Heart left ventricle (tissue), 16 donors: ENCODE measurements at regions of chr20 and their contacts with region 1.

Region 1: DNA sequence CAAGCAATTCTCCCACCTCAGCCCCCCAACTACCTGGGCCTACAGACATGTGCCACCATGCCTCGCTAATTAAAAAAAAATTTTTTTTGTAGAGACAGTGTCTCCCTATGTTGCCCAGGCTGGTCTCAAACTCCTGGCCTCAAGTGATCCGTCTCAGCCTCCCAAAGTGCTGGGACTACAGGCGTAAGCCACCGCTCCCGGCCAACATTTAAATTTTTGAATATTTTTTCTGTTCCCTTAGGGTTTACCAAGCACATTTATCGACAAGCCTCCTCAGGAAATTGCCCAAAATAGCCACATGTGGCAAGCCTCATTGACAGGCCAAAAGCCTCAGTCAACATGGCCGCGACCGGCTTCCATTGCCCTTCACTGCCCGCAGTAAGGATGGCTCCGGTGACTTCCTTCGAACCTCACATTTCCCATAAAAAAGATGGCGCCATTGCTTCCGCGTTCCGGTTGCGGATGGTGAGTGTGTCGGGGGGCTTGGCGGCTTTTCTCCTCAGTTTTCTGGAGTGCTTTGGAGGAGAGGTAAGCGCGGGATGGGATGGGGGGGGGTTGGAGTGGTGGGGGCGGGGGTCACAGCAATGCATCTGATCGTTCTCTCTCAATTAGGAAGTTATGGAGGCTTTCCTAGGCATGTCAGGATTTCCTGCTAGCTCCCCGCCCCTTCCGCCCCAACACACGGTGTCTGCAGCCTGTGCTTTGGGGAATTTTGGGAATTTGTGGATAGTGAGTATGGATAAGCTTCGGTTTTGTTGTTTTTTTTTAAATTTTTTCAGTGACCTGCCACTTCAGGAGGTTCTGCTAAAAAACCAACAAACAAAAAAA is at the start of gene SHLD1:
- DNase-seq: peak; percentile 87 to 91 (median 90)
- ATAC-seq: peak; percentile 96 to 99 (median 98)
- H3K4me3 ChIP-seq: peak within 1 kb of the TSS; percentile 23 to 92 (median 64)
- H3K27ac ChIP-seq: peak within 1 kb of the TSS; percentile 68 to 94 (median 87)
- H3K4me1 ChIP-seq: peaks cover 0 to 15% (median 4%) of the 10 kb centered on the region in 12 donors
- H3K27me3 ChIP-seq: no peaks in the 10 kb centered on the region
- CTCF ChIP-seq: no peak
- POLR2A ChIP-seq: no peak
- total RNA-seq, gene SHLD1: 0.94 to 7.1 (median 4.5) TPM

Region 2: GRCh38 chr20:5608442-5609161 is 141.6 kb before region 1 on chr20:
- intact Hi-C with region 1: loop called in 3 of 10 experiments (anchors 10 kb)
- DNase-seq: no peak
- ATAC-seq: no peak
- H3K4me3 ChIP-seq: peak overlapping the region in 10 of 12 donors; percentile 1 to 90 (median 82)
- H3K27ac ChIP-seq: peak overlapping the region in 7 of 12 donors; percentile 94 to 98 (median 96)
- H3K4me1 ChIP-seq: peaks cover 0 to 61% (median 27%) of the 10 kb centered on the region in 12 donors
- H3K27me3 ChIP-seq: no peaks in the 10 kb centered on the region
- CTCF ChIP-seq: no peak
- POLR2A ChIP-seq: no peak

Region 3: GRCh38 chr20:5703681-5704101 is 46.5 kb before region 1 on chr20:
- intact Hi-C with region 1: loop called in 1 of 10 experiments (anchors 5 kb)
- DNase-seq: peak in 1 of 5 donors; percentile 23
- ATAC-seq: peak in 3 of 4 donors; percentile 45 to 83 (median 61)
- H3K4me3 ChIP-seq: peak overlapping the region in 3 of 12 donors; percentile 13 to 21 (median 14)
- H3K27ac ChIP-seq: peak overlapping the region in 10 of 12 donors; percentile 10 to 59 (median 28)
- H3K4me1 ChIP-seq: peaks cover 0 to 13% (median 5%) of the 10 kb centered on the region in 12 donors
- H3K27me3 ChIP-seq: no peaks in the 10 kb centered on the region
- CTCF ChIP-seq: no peak
- POLR2A ChIP-seq: no peak

Region 4: GRCh38 chr20:5786930-5787795 is 37.0 kb after region 1 on chr20:
- intact Hi-C with region 1: no loop called
- DNase-seq: peak in 2 of 5 donors; percentile 18 to 43
- ATAC-seq: peak in 3 of 4 donors; percentile 64 to 72 (median 67)
- H3K4me3 ChIP-seq: no peak overlapping the region
- H3K27ac ChIP-seq: peak overlapping the region in 6 of 12 donors; percentile 29 to 61 (median 37)
- H3K4me1 ChIP-seq: peaks cover 0 to 26% (median 15%) of the 10 kb centered on the region in 12 donors
- H3K27me3 ChIP-seq: no peaks in the 10 kb centered on the region
- CTCF ChIP-seq: no peak
- POLR2A ChIP-seq: no peak